ENCODE measurements at regions of chr9 and their contacts with region 1.

Region 1: DNA sequence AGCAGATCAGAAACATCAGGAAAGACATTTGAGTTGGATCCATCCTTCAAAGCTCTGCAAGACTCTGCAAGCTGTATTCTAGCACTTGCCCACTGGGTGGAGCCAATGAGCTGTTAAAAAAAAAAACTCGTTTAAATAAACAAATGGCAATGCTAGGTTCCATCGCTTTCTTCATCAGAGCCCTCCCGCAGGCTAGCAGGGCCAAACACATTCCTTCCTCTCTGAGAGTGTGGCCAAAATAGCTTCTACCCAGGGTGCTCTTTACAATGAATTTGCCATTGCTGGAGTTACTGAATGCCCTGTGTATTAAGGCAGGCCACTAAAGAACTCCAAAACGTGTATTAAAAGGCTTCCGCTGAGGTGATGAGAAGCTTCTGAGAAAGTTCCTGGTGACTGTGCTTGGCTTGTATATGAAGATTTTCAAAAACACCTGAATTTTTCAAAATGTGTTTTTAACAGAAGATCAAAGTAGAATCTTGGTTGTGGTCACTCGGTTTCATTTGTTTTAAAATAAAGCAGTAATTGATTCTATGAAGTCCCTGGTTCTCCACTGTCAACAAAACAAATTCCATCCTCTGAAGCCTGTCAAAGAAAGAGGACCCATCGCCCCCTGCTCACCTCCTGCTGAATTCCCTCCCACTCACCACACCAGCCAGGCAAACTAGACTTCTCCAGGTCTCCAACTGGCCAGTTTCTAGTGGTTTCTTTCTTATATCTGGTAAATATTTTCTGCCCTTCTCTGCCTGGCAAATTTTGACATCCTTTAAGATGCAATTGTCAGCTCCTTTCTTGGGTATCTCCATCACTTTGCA is 36.5 kb upstream of the EQTN start:
- DNase-seq: peak; percentile 77
- H3K4me3 ChIP-seq: no peak overlapping the region
- H3K27ac ChIP-seq: no peak overlapping the region
- H3K4me1 ChIP-seq: peaks cover 19% of the 10 kb centered on the region
- H3K27me3 ChIP-seq: no peaks in the 10 kb centered on the region
- CTCF ChIP-seq: peak; percentile 82 to 90 (median 85)
- POLR2A ChIP-seq: no peak

Region 2: GRCh38 chr9:27204578-27204977 is 128.9 kb before region 1 on chr9:
- intact Hi-C with region 1: no loop called
- DNase-seq: no peak
- H3K4me3 ChIP-seq: no peak overlapping the region
- H3K27ac ChIP-seq: no peak overlapping the region
- H3K4me1 ChIP-seq: no peaks in the 10 kb centered on the region
- H3K27me3 ChIP-seq: no peaks in the 10 kb centered on the region
- CTCF ChIP-seq: no peak
- POLR2A ChIP-seq: no peak

Region 3: GRCh38 chr9:27529316-27530278 is 196.2 kb after region 1 on chr9 and contains the start of gene MOB3B:
- intact Hi-C with region 1: loop called (anchors 5 kb)
- DNase-seq: peak; percentile 90
- H3K4me3 ChIP-seq: peak within 1 kb of the TSS; percentile 78 to 87
- H3K27ac ChIP-seq: peak within 1 kb of the TSS; percentile 89 to 96
- H3K4me1 ChIP-seq: peaks cover 6% of the 10 kb centered on the region
- H3K27me3 ChIP-seq: no peaks in the 10 kb centered on the region
- CTCF ChIP-seq: peak; percentile 96 to 98 (median 97)
- POLR2A ChIP-seq: no peak
- total RNA-seq, gene MOB3B: 17.5 to 23.2 TPM

Region 4: GRCh38 chr9:27548055-27548741 is 214.8 kb after region 1 on chr9:
- intact Hi-C with region 1: loop called (anchors 5 kb)
- DNase-seq: no peak
- H3K4me3 ChIP-seq: no peak overlapping the region
- H3K27ac ChIP-seq: peak overlapping the region in 1 of 2 donors; percentile 43
- H3K4me1 ChIP-seq: no peaks in the 10 kb centered on the region
- H3K27me3 ChIP-seq: no peaks in the 10 kb centered on the region
- CTCF ChIP-seq: peak; percentile 12 to 47 (median 31)
- POLR2A ChIP-seq: no peak

Measured in testis (tissue), 5 donors.